CD8-positive, alpha-beta T cell (primary cell): ENCODE measurements at regions of chr10 and their contacts with region 1.

Region 1: GRCh38 chr10:77111611-77112550 is 525.7 kb downstream of the KCNMA1 start:
- DNase-seq: peak in 3 of 9 experiments; percentile 7 to 50 (median 37)
- ATAC-seq: peak; percentile 34
- H3K4me3 ChIP-seq: no peak overlapping the region
- H3K4me3 Mint-ChIP-seq: no peak overlapping the region
- H3K27ac ChIP-seq: no peak overlapping the region
- H3K27ac Mint-ChIP-seq: no peak overlapping the region
- H3K4me1 ChIP-seq: no peaks in the 10 kb centered on the region
- H3K4me1 Mint-ChIP-seq: no peaks in the 10 kb centered on the region
- H3K27me3 ChIP-seq: no peaks in the 10 kb centered on the region
- H3K27me3 Mint-ChIP-seq: no peaks in the 10 kb centered on the region
- CTCF ChIP-seq: peak; percentile 81

Region 2: DNA sequence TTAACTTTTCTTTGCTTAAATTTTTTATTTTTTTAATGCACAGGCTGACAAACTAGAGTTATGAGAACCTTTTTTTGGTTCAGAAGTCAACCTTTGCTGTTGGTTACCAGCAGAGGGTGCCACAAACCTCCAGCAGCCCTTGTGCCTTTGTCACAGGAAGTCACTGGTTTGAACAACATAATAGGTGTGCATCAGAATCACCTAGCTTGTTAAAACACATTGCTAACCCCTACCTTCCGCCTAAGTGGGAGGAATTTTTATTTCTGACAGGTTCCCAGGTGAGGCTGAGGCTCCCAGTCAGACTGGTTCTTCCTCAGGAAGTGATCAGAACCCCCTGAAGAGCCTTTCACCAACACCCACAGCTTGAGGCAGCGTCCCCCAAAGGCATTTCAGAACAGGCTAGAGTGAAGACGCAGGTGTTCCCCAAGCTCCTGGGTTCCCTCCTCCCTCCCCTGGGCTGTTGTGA is 1923.9 kb before region 1 on chr10:
- CTCF ChIA-PET with region 1: no interaction called
- POLR2A ChIA-PET with region 1: no interaction called
- intact Hi-C with region 1: loop called in 1 of 2 experiments (anchors 5 kb)
- DNase-seq: peak; percentile 46 to 90 (median 73)
- ATAC-seq: peak; percentile 98
- H3K4me3 ChIP-seq: no peak overlapping the region
- H3K4me3 Mint-ChIP-seq: peak overlapping the region; percentile 39
- H3K27ac ChIP-seq: peak overlapping the region; percentile 48 to 79
- H3K27ac Mint-ChIP-seq: peak overlapping the region; percentile 97
- H3K4me1 ChIP-seq: peaks cover 8% of the 10 kb centered on the region
- H3K4me1 Mint-ChIP-seq: peaks cover 7% of the 10 kb centered on the region
- H3K27me3 ChIP-seq: no peaks in the 10 kb centered on the region
- H3K27me3 Mint-ChIP-seq: no peaks in the 10 kb centered on the region
- CTCF ChIP-seq: peak; percentile 87

Region 3: GRCh38 chr10:75401569-75402485 is 1710.1 kb before region 1 on chr10 and contains the start of gene ZNF503:
- CTCF ChIA-PET with region 1: no interaction called
- POLR2A ChIA-PET with region 1: no interaction called
- intact Hi-C with region 1: loop called in 1 of 2 experiments (anchors 2 kb)
- DNase-seq: peak in 2 of 9 experiments; percentile 25 to 43
- ATAC-seq: peak; percentile 28
- H3K4me3 ChIP-seq: peak within 1 kb of the TSS; percentile 48 to 55
- H3K4me3 Mint-ChIP-seq: peak within 1 kb of the TSS; percentile 78
- H3K27ac ChIP-seq: no peak within 1 kb of the TSS
- H3K27ac Mint-ChIP-seq: no peak within 1 kb of the TSS
- H3K4me1 ChIP-seq: peaks cover 15% of the 10 kb centered on the region
- H3K4me1 Mint-ChIP-seq: peaks cover 26% of the 10 kb centered on the region
- H3K27me3 ChIP-seq: peaks cover 16 to 36% of the 10 kb centered on the region in 2 experiments
- H3K27me3 Mint-ChIP-seq: peaks cover 55% of the 10 kb centered on the region
- CTCF ChIP-seq: no peak
- total RNA-seq, gene ZNF503: not detected

Region 4: DNA sequence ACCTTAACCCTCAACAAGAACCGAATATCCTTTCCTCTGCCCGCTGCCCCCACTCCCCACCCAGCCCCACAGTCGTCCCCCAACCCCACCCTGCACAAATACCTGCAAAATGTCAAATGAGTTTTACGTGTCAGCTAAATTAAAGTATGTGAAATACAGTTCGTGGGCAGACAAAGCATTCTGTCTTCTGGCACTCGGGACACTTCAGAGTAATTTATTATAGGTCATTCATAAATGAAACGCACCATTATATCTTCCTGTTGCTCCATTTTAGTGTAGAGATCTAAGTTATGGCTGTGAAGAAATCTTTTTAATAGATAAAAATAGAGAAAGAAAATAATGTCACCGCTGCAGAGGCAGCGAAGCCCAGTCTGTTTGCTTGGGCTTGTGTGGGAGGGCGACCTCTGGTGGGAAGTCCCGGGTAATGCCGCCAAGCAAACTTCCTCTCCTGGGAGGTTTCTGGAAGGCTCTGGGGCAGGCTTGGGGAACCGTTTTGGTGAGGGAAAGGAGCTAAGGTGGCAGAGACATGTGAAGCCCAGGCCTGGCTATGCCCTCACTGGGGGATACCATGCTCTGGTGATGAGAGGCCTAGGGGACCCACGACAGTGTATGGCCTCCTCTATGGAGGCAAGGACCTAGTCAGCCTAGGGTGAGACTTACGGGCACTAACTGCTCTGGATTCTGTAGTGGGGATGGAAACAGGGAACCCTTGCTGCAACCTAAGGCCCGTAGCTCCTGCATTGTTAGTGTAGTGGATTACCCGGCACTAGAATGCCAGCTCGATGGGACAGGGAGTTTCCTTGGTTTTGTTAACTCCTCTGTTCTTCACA is 1075.6 kb before region 1 on chr10:
- CTCF ChIA-PET with region 1: no interaction called
- POLR2A ChIA-PET with region 1: no interaction called
- intact Hi-C with region 1: loop called in 1 of 2 experiments (anchors 5 kb)
- DNase-seq: peak in 6 of 9 experiments; percentile 7 to 27 (median 22)
- ATAC-seq: no peak
- H3K4me3 ChIP-seq: no peak overlapping the region
- H3K4me3 Mint-ChIP-seq: no peak overlapping the region
- H3K27ac ChIP-seq: no peak overlapping the region
- H3K27ac Mint-ChIP-seq: no peak overlapping the region
- H3K4me1 ChIP-seq: no peaks in the 10 kb centered on the region
- H3K4me1 Mint-ChIP-seq: no peaks in the 10 kb centered on the region
- H3K27me3 ChIP-seq: no peaks in the 10 kb centered on the region
- H3K27me3 Mint-ChIP-seq: peaks cover 5% of the 10 kb centered on the region
- CTCF ChIP-seq: no peak

Region 5: DNA sequence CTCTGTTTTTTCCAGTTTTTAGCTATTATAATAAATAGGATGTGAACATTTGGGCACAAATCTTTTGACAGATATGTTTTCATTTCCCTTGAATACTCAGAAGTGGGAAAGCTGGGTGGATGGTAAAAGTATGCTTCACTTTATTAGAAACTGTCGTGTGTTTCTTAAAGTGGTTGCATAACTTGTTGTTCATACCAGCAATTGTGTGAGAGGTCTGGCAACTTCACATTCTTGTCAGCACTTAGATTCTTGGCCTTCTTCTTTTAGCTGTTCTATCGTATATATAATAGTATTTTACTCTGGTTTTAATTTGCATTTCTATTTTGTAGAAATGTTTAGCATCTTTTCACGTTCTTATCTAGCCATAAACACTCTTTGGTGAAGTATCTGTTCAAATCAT is 368.7 kb before region 1 on chr10:
- CTCF ChIA-PET with region 1: no interaction called
- POLR2A ChIA-PET with region 1: no interaction called
- intact Hi-C with region 1: no loop called
- DNase-seq: no peak
- ATAC-seq: no peak
- H3K4me3 ChIP-seq: no peak overlapping the region
- H3K4me3 Mint-ChIP-seq: no peak overlapping the region
- H3K27ac ChIP-seq: no peak overlapping the region
- H3K27ac Mint-ChIP-seq: no peak overlapping the region
- H3K4me1 ChIP-seq: no peaks in the 10 kb centered on the region
- H3K4me1 Mint-ChIP-seq: no peaks in the 10 kb centered on the region
- H3K27me3 ChIP-seq: no peaks in the 10 kb centered on the region
- H3K27me3 Mint-ChIP-seq: no peaks in the 10 kb centered on the region
- CTCF ChIP-seq: no peak

Region 6: GRCh38 chr10:76786504-76787072 is 325.3 kb before region 1 on chr10:
- CTCF ChIA-PET with region 1: no interaction called
- POLR2A ChIA-PET with region 1: no interaction called
- intact Hi-C with region 1: no loop called
- DNase-seq: no peak
- ATAC-seq: no peak
- H3K4me3 ChIP-seq: no peak overlapping the region
- H3K4me3 Mint-ChIP-seq: no peak overlapping the region
- H3K27ac ChIP-seq: no peak overlapping the region
- H3K27ac Mint-ChIP-seq: no peak overlapping the region
- H3K4me1 ChIP-seq: no peaks in the 10 kb centered on the region
- H3K4me1 Mint-ChIP-seq: no peaks in the 10 kb centered on the region
- H3K27me3 ChIP-seq: no peaks in the 10 kb centered on the region
- H3K27me3 Mint-ChIP-seq: no peaks in the 10 kb centered on the region
- CTCF ChIP-seq: no peak

Region 7: DNA sequence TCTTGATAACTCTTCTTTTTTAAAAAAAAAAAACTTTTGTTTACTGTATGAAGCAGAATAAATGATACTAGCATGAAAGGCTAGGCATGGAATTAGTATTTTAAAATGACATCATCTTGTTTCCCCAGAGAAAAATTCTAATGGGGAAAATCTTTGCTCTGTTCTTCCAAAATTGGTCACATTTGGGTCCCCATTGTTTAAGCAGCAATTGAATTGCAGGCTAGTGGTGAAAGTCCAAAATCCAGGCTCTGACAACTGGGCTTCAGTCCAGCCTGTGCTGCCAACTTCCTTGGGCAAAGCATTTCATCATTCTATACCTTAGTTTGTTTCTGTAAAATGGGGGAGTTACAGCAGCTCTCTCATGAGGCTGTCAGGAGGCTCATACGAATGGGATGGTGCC is 200.7 kb before region 1 on chr10:
- CTCF ChIA-PET with region 1: no interaction called
- POLR2A ChIA-PET with region 1: no interaction called
- intact Hi-C with region 1: no loop called
- DNase-seq: no peak
- ATAC-seq: no peak
- H3K4me3 ChIP-seq: no peak overlapping the region
- H3K4me3 Mint-ChIP-seq: no peak overlapping the region
- H3K27ac ChIP-seq: no peak overlapping the region
- H3K27ac Mint-ChIP-seq: no peak overlapping the region
- H3K4me1 ChIP-seq: no peaks in the 10 kb centered on the region
- H3K4me1 Mint-ChIP-seq: no peaks in the 10 kb centered on the region
- H3K27me3 ChIP-seq: no peaks in the 10 kb centered on the region
- H3K27me3 Mint-ChIP-seq: peaks cover 5% of the 10 kb centered on the region
- CTCF ChIP-seq: no peak

Region 8: GRCh38 chr10:76984559-76985443 is 127.1 kb before region 1 on chr10:
- CTCF ChIA-PET with region 1: interaction called, 4 read pairs
- POLR2A ChIA-PET with region 1: no interaction called
- intact Hi-C with region 1: loop called in 1 of 2 experiments (anchors 5 kb)
- DNase-seq: peak; percentile 23 to 76 (median 62)
- ATAC-seq: peak; percentile 34
- H3K4me3 ChIP-seq: no peak overlapping the region
- H3K4me3 Mint-ChIP-seq: no peak overlapping the region
- H3K27ac ChIP-seq: no peak overlapping the region
- H3K27ac Mint-ChIP-seq: no peak overlapping the region
- H3K4me1 ChIP-seq: no peaks in the 10 kb centered on the region
- H3K4me1 Mint-ChIP-seq: no peaks in the 10 kb centered on the region
- H3K27me3 ChIP-seq: no peaks in the 10 kb centered on the region
- H3K27me3 Mint-ChIP-seq: no peaks in the 10 kb centered on the region
- CTCF ChIP-seq: peak; percentile 92

Region 9: GRCh38 chr10:77101341-77101740 is 10.5 kb before region 1 on chr10:
- CTCF ChIA-PET with region 1: interaction called, 12 read pairs
- POLR2A ChIA-PET with region 1: no interaction called
- intact Hi-C with region 1: no loop called
- DNase-seq: no peak
- ATAC-seq: no peak
- H3K4me3 ChIP-seq: no peak overlapping the region
- H3K4me3 Mint-ChIP-seq: no peak overlapping the region
- H3K27ac ChIP-seq: no peak overlapping the region
- H3K27ac Mint-ChIP-seq: no peak overlapping the region
- H3K4me1 ChIP-seq: no peaks in the 10 kb centered on the region
- H3K4me1 Mint-ChIP-seq: no peaks in the 10 kb centered on the region
- H3K27me3 ChIP-seq: no peaks in the 10 kb centered on the region
- H3K27me3 Mint-ChIP-seq: peaks cover 9% of the 10 kb centered on the region
- CTCF ChIP-seq: no peak

Region 10: GRCh38 chr10:77131214-77131613 is 19.3 kb after region 1 on chr10:
- CTCF ChIA-PET with region 1: no interaction called
- POLR2A ChIA-PET with region 1: no interaction called
- intact Hi-C with region 1: no loop called
- DNase-seq: no peak
- ATAC-seq: no peak
- H3K4me3 ChIP-seq: no peak overlapping the region
- H3K4me3 Mint-ChIP-seq: no peak overlapping the region
- H3K27ac ChIP-seq: no peak overlapping the region
- H3K27ac Mint-ChIP-seq: no peak overlapping the region
- H3K4me1 ChIP-seq: no peaks in the 10 kb centered on the region
- H3K4me1 Mint-ChIP-seq: no peaks in the 10 kb centered on the region
- H3K27me3 ChIP-seq: peaks cover 0 to 4% of the 10 kb centered on the region in 2 experiments
- H3K27me3 Mint-ChIP-seq: peaks cover 14% of the 10 kb centered on the region
- CTCF ChIP-seq: no peak